H1 (cell line): ENCODE measurements at regions of chr19 and their contacts with region 1.

Region 1: GRCh38 chr19:42132851-42133528 is 744 bp upstream of the POU2F2 start:
- DNase-seq: peak; percentile 70 to 98
- H3K4me3 ChIP-seq: peak overlapping the region; percentile 24 to 60 (median 52); a peak in 7 of 8 replicates
- H3K27ac ChIP-seq: no peak overlapping the region
- H3K4me1 ChIP-seq: peaks cover 3 to 12% (median 9%) of the 10 kb centered on the region in 4 experiments; a peak in 6 of 7 replicates
- H3K27me3 ChIP-seq: peaks cover 0 to 17% (median 8%) of the 10 kb centered on the region in 4 experiments; a peak in 5 of 7 replicates
- CTCF ChIP-seq: peak; percentile 81 to 97 (median 88)
- EP300 ChIP-seq: peak in 1 of 2 experiments; percentile 35; a peak in 1 of 3 replicates
- POLR2A ChIP-seq: peak in 1 of 2 experiments; percentile 53; a peak in 1 of 3 replicates
- RAD21 ChIP-seq: peak; percentile 98

Region 2: GRCh38 chr19:42048992-42049391 is 84.0 kb before region 1 on chr19:
- CTCF ChIA-PET with region 1: no interaction called
- POLR2A ChIA-PET with region 1: no interaction called
- DNase-seq: no peak
- H3K4me3 ChIP-seq: no peak overlapping the region
- H3K27ac ChIP-seq: no peak overlapping the region
- H3K4me1 ChIP-seq: no peaks in the 10 kb centered on the region
- H3K27me3 ChIP-seq: no peaks in the 10 kb centered on the region
- CTCF ChIP-seq: no peak
- EP300 ChIP-seq: no peak
- POLR2A ChIP-seq: no peak
- RAD21 ChIP-seq: no peak

Region 3: DNA sequence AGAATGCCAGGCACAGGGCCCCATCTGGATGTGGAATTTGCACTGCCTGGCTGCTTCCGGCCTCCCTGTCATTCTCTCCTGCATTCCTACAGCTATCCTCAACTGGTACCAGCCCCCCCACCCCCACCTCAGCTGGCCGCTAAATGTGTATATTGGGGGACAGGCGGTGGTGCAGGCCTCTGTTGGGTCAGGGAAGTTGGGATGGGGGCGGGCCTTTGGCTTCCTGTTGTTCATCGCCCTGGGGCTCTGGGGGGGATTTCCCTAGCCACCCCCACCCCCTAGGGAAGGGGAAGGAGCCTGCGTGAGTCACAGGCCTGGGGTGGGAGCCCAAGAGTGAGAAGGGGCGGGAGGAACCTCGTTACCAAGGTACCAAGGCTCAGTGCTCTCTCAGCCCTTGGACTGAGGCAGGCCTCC is 11.3 kb before region 1 on chr19:
- CTCF ChIA-PET with region 1: interaction called, 20 read pairs
- POLR2A ChIA-PET with region 1: interaction called, 4 read pairs
- DNase-seq: no peak
- H3K4me3 ChIP-seq: no peak overlapping the region
- H3K27ac ChIP-seq: no peak overlapping the region
- H3K4me1 ChIP-seq: peaks cover 0 to 12% (median 8%) of the 10 kb centered on the region in 4 experiments; a peak in 4 of 7 replicates
- H3K27me3 ChIP-seq: no peaks in the 10 kb centered on the region
- CTCF ChIP-seq: no peak
- EP300 ChIP-seq: no peak
- POLR2A ChIP-seq: no peak
- RAD21 ChIP-seq: no peak

Region 4: DNA sequence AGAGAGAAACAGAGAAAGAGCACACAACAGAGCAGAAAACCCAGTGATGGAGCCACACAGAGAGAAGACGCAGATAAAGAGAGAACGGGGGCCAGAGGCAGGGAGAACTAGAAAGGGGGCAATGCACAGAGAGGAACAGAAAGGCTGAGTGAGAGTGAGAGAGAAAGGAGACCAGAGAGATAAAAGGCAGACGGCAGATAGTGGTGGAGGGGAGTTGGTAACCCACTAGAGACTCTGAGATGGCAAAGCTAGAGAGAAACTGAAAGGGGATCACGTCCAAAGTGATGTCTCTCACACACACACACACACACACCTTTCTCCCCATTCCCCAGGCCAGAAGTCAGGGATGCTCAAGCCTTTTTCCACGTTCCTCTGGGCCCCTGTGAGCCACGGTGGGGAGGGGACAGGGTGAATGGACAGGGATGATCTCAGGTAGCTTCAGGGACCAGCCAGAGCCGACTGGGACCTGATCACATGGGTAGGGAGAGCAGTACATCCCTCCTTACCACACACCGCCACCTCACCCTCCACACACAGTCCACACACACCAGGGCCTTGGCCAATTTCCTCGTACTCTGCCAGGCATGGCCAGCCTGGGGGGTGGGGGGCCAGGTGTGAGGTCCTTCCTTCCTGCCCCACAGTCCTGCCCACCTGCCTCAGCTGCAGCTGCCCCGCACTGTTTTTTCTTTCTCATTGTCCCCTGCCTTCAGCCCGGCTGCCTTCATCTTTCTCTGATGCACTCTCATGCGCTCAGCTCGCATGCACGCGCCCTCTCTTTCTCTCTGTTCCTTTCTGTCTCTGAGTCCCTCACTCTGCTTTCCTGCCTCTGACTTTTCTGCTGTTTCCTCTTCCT is 21.7 kb after region 1 on chr19:
- CTCF ChIA-PET with region 1: interaction called, 10 read pairs
- POLR2A ChIA-PET with region 1: interaction called, 6 read pairs
- DNase-seq: no peak
- H3K4me3 ChIP-seq: no peak overlapping the region; a peak in 1 of 8 replicates
- H3K27ac ChIP-seq: no peak overlapping the region
- H3K4me1 ChIP-seq: peaks cover 0 to 37% (median 21%) of the 10 kb centered on the region in 4 experiments; a peak in 6 of 7 replicates
- H3K27me3 ChIP-seq: peaks cover 0 to 11% (median 7%) of the 10 kb centered on the region in 4 experiments; a peak in 4 of 7 replicates
- CTCF ChIP-seq: no peak
- EP300 ChIP-seq: no peak
- POLR2A ChIP-seq: no peak
- RAD21 ChIP-seq: no peak

Region 5: GRCh38 chr19:42176990-42177685 is 44.1 kb after region 1 on chr19:
- CTCF ChIA-PET with region 1: interaction called, 159 read pairs
- POLR2A ChIA-PET with region 1: interaction called, 5 read pairs
- DNase-seq: peak in 1 of 2 experiments; percentile 87
- H3K4me3 ChIP-seq: peak overlapping the region; percentile 28 to 79 (median 48)
- H3K27ac ChIP-seq: no peak overlapping the region
- H3K4me1 ChIP-seq: peaks cover 0 to 10% (median 7%) of the 10 kb centered on the region in 4 experiments; a peak in 5 of 7 replicates
- H3K27me3 ChIP-seq: peaks cover 40 to 72% (median 64%) of the 10 kb centered on the region in 4 experiments
- CTCF ChIP-seq: peak in 2 of 3 experiments; percentile 32 to 62; a peak in 2 of 4 replicates
- EP300 ChIP-seq: no peak
- POLR2A ChIP-seq: no peak
- RAD21 ChIP-seq: peak in 1 of 2 experiments; percentile 22; a peak in 3 of 4 replicates